ENCODE measurements at regions of chr19 and their contacts with region 1.

Region 1: GRCh38 chr19:10776900-10777650 is 58.9 kb downstream of the TMED1 start:
- DNase-seq: no peak
- ATAC-seq: no peak
- H3K4me3 ChIP-seq: no peak overlapping the region
- H3K27ac ChIP-seq: no peak overlapping the region
- H3K4me1 ChIP-seq: no peaks in the 10 kb centered on the region
- H3K27me3 ChIP-seq: no peaks in the 10 kb centered on the region
- CTCF ChIP-seq: no peak
- POLR2A ChIP-seq: no peak

Region 2: GRCh38 chr19:10730923-10731322 is 46.2 kb before region 1 on chr19:
- intact Hi-C with region 1: loop called in 1 of 2 experiments (anchors 5 kb)
- DNase-seq: no peak
- ATAC-seq: peak in 3 of 4 donors; percentile 23 to 25 (median 24)
- H3K4me3 ChIP-seq: no peak overlapping the region
- H3K27ac ChIP-seq: peak overlapping the region in 2 of 3 donors; percentile 29 to 45
- H3K4me1 ChIP-seq: peaks cover 0 to 9% (median 0%) of the 10 kb centered on the region in 4 donors
- H3K27me3 ChIP-seq: no peaks in the 10 kb centered on the region
- CTCF ChIP-seq: no peak
- POLR2A ChIP-seq: no peak

Measured in right lobe of liver (tissue), 6 donors.